MCF 10A (cell line): ENCODE measurements at regions of chr16 and their contacts with region 1.

Region 1: GRCh38 chr16:85821441-85822135 is 22.1 kb downstream of the COX4I1 start:
- DNase-seq: peak; percentile 68
- H3K4me3 Mint-ChIP-seq: no peak overlapping the region
- H3K27ac Mint-ChIP-seq: no peak overlapping the region
- H3K4me1 Mint-ChIP-seq: peaks cover 6% of the 10 kb centered on the region
- H3K27me3 Mint-ChIP-seq: peaks cover 27% of the 10 kb centered on the region
- CTCF ChIP-seq: peak; percentile 96

Region 2: DNA sequence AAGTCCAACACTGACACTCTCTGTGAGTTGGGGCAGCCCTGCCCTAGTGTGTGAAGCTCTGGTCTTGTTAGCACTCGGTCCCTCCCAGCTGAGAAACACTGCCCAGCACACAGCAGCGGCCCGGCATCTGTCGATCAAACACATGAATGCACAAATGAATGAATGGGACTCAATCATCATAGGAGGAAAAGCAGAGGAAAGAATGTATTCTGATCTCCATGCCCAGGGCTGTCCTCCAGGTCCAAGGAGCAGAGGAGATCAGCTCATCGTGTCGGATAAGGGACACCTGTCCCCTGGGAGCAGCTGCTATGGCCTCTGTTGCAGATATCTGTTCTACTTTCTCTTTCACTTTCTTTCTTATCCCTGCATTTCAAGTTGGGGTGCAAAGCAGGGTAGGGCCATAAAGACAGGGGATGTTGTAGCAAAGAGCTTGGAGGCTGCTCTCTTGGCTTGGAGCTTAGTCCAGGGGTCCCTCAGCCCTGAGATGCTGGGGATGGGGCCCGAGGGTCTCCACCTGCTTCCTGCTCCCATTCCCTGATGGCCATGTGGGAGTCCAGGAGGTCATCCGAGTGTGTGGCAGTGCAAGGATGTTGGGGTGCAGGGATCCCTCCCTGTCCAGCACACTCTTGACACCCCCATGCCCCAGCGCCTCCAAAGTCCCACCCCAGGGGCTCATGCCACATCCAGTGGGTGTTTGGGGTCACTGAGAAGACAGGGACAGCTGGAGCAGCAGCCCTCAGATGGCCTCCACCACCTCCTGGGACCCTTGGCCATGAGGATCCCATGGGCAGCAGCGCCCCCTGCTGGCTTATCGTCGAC is 165.6 kb after region 1 on chr16:
- CTCF ChIA-PET with region 1: interaction called, 81 read pairs
- POLR2A ChIA-PET with region 1: interaction called, 4 read pairs
- intact Hi-C with region 1: no loop called
- DNase-seq: peak; percentile 4
- H3K4me3 Mint-ChIP-seq: peak overlapping the region; percentile 26
- H3K27ac Mint-ChIP-seq: no peak overlapping the region
- H3K4me1 Mint-ChIP-seq: no peaks in the 10 kb centered on the region
- H3K27me3 Mint-ChIP-seq: peaks cover 99% of the 10 kb centered on the region
- CTCF ChIP-seq: peak; percentile 54

Region 3: DNA sequence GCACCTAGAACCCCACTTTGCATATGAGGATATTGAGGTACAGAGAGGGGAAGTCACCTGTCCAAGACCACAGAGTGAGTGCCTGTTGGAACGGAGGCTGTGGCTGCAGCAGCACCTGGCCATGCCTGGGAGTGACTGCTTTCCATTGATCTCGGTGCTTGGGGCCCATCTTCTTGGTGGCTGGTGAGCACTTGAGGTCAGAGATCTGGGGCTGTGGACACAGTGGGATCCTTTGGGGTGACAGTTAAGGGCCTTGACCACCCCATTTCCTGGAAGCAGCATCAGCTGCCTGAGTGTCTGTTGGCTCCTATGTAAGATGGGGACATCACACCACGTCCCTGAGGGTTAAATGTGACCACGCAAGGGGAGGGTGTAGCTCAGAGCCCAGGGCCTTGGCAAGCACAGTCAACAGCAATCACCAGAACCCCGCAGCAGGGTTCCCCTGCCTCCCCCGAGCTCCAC is 189.1 kb after region 1 on chr16:
- CTCF ChIA-PET with region 1: interaction called, 125 read pairs
- POLR2A ChIA-PET with region 1: no interaction called
- intact Hi-C with region 1: no loop called
- DNase-seq: no peak
- H3K4me3 Mint-ChIP-seq: no peak overlapping the region
- H3K27ac Mint-ChIP-seq: no peak overlapping the region
- H3K4me1 Mint-ChIP-seq: no peaks in the 10 kb centered on the region
- H3K27me3 Mint-ChIP-seq: peaks cover 65% of the 10 kb centered on the region
- CTCF ChIP-seq: no peak

Region 4: GRCh38 chr16:86026171-86026910 is 204.8 kb after region 1 on chr16:
- CTCF ChIA-PET with region 1: interaction called, 125 read pairs
- POLR2A ChIA-PET with region 1: no interaction called
- intact Hi-C with region 1: no loop called
- DNase-seq: no peak
- H3K4me3 Mint-ChIP-seq: no peak overlapping the region
- H3K27ac Mint-ChIP-seq: no peak overlapping the region
- H3K4me1 Mint-ChIP-seq: no peaks in the 10 kb centered on the region
- H3K27me3 Mint-ChIP-seq: peaks cover 62% of the 10 kb centered on the region
- CTCF ChIP-seq: no peak